ENCODE measurements at regions of chr6 and their contacts with region 1.

Region 1: GRCh38 chr6:163956571-163957407 is 542.3 kb downstream of the QKI start:
- DNase-seq: peak; percentile 87
- ATAC-seq: peak; percentile 89

Region 2: GRCh38 chr6:163170294-163170883 is 786.4 kb before region 1 on chr6:
- intact Hi-C with region 1: loop called (anchors 10 kb)
- DNase-seq: no peak
- ATAC-seq: no peak

Region 3: DNA sequence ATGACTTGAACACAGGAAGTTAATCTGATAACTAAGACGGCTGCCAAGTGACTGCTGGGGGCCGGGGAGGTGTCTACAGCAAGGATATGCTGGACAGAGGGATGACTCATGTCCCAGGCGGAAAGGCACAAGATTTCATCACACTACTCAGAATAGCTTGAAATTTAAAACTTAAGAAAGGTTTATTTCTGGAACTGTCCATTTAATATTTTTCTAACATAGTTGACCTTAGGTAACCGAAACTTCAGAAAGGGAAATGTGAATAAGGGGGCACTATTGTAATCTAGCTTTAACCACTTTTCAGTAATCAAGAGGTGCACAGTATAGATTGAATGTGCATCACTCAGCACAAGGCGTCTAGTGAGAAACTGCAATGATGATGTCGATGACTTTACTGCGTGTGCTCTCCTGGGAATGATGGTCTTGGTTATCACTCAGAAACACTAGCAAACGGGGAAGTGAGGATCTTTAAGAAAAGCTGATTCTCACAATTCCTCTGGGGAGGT is 370.8 kb before region 1 on chr6:
- intact Hi-C with region 1: loop called (anchors 10 kb)
- DNase-seq: peak; percentile 72
- ATAC-seq: peak; percentile 69

Region 4: DNA sequence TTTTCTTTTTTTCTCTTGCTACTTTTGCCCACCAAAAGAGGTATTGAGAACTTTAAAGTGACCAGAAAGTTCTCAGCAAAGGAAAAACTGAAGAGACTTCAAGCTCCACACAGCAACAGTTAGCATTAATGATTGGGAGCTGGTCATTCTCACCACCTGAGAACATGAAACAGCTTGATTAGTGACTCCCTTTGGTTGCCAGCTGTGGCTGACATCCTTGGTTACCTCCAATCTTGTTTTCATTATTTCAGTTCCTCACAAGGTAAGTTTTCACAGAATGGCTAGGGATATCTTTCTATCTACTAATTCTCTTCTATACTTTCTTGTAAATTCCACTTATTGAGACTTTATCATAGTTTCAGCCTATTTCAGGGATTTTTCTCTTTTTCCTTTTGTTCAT is 114.3 kb before region 1 on chr6:
- intact Hi-C with region 1: loop called (anchors 10 kb)
- DNase-seq: no peak
- ATAC-seq: no peak